Activated CD8-positive, alpha-beta T cell treated with anti-CD3 and anti-CD28 coated beads for 36 hours (primary cell): ENCODE measurements at regions of chr9 and their contacts with region 1.

Region 1: DNA sequence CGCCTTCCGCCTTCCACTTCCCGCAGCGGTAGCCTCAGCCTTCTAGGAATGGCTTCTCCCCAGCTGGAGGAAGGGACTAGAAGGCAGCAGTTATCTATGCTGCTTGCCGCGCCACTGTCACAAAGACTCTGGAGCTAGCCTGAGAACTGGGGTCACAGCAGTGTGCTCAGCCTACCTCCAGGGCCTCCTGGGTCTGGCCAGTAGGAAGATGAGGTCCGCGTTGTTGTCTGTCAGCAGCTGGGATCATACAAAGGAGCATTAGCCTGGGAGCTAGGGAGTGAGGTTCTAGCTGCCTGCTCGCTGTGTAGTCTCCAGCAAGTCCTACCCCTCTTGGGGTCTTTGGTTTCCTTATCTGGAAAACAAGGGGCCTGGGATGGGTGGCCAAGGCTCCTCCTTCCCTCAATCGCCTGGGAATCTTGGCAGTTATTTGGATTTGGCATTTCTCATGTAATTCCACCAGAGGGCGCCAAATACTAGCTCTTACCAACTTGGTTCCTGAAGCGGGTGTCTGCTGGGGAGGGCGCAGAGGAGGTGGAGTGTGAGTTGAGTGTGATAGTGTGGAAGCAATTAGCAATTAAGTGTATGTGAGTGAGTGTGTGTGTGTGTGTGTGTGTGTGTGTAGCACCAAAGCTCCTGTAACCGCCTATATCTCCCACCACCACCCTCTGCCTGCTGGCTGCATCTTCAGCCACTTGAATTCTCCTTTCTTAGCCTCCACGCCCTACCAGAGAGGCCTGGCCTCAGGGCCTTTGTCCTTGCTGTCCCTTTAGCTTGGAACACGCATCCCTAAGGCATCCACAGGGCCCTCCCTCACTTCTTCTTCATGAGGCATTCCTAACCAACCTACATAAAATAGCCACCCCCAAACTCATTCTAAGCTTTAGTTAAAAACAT is 97.1 kb downstream of the ENTREP1 start:
- DNase-seq: peak; percentile 52
- ATAC-seq: peak; percentile 49
- H3K4me3 Mint-ChIP-seq: no peak overlapping the region
- H3K27ac Mint-ChIP-seq: no peak overlapping the region
- H3K4me1 Mint-ChIP-seq: no peaks in the 10 kb centered on the region
- H3K27me3 Mint-ChIP-seq: peaks cover 3% of the 10 kb centered on the region
- CTCF ChIP-seq: peak; percentile 77

Region 2: GRCh38 chr9:69549310-69550202 is 127.4 kb after region 1 on chr9:
- CTCF ChIA-PET with region 1: interaction called, 37 read pairs
- POLR2A ChIA-PET with region 1: no interaction called
- intact Hi-C with region 1: loop called (anchors 2 kb)
- DNase-seq: peak; percentile 46
- ATAC-seq: peak; percentile 89
- H3K4me3 Mint-ChIP-seq: no peak overlapping the region
- H3K27ac Mint-ChIP-seq: no peak overlapping the region
- H3K4me1 Mint-ChIP-seq: peaks cover 3% of the 10 kb centered on the region
- H3K27me3 Mint-ChIP-seq: peaks cover 19% of the 10 kb centered on the region
- CTCF ChIP-seq: peak; percentile 85

Region 3: DNA sequence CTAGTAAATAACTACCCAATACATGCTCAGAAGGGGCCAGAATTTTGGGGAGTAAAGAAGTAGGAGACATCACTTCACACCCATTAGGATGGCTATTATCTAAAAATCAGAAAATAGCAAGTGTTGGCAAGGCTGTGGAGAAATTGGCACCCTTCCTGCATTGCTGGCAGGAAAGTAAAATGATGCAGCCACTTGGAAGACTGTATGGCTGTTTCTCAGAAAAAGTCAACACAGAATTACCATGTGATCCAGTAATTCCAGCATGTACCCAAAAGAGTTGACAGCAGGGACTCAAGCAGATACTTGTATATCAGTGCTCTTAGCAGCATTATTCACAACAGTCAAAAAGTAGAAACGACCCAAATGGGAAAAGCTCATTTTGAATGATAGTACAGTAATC is 142.4 kb after region 1 on chr9:
- CTCF ChIA-PET with region 1: no interaction called
- POLR2A ChIA-PET with region 1: no interaction called
- intact Hi-C with region 1: no loop called
- DNase-seq: no peak
- ATAC-seq: no peak
- H3K4me3 Mint-ChIP-seq: no peak overlapping the region
- H3K27ac Mint-ChIP-seq: no peak overlapping the region
- H3K4me1 Mint-ChIP-seq: no peaks in the 10 kb centered on the region
- H3K27me3 Mint-ChIP-seq: peaks cover 7% of the 10 kb centered on the region
- CTCF ChIP-seq: no peak

Region 4: DNA sequence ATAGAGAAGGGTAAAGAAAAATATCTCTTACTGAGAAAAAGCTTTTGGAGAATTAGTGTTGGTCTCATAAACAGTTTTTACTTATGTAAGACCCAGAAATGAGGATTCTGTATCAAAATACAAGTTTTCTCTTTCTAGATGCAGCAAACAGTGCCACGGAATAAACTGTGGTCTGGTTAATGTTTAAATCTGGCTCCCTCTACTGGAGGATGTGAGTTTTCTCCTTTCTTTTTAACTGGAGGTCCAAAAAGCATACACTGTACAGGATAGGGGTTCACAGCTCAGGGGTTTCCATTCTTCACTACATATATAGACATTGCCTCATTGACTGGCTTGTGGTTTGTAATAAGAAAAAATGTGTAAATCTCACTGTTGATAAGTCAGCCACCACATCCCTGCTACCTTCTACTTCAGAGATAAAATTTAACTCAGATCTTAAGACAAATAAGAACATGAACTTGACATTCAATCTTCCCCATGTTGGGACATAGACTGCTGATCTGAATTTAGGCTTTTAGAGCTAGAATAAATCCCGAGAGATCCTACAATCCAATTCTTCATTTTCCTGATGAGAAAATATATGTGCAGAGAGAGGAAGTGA is 497.4 kb after region 1 on chr9:
- CTCF ChIA-PET with region 1: interaction called, 28 read pairs
- POLR2A ChIA-PET with region 1: no interaction called
- intact Hi-C with region 1: loop called (anchors 10 kb)
- DNase-seq: no peak
- ATAC-seq: peak; percentile 56
- H3K4me3 Mint-ChIP-seq: no peak overlapping the region
- H3K27ac Mint-ChIP-seq: no peak overlapping the region
- H3K4me1 Mint-ChIP-seq: no peaks in the 10 kb centered on the region
- H3K27me3 Mint-ChIP-seq: peaks cover 14% of the 10 kb centered on the region
- CTCF ChIP-seq: peak; percentile 79